ENCODE measurements at regions of chr4 and their contacts with region 1.

Region 1: DNA sequence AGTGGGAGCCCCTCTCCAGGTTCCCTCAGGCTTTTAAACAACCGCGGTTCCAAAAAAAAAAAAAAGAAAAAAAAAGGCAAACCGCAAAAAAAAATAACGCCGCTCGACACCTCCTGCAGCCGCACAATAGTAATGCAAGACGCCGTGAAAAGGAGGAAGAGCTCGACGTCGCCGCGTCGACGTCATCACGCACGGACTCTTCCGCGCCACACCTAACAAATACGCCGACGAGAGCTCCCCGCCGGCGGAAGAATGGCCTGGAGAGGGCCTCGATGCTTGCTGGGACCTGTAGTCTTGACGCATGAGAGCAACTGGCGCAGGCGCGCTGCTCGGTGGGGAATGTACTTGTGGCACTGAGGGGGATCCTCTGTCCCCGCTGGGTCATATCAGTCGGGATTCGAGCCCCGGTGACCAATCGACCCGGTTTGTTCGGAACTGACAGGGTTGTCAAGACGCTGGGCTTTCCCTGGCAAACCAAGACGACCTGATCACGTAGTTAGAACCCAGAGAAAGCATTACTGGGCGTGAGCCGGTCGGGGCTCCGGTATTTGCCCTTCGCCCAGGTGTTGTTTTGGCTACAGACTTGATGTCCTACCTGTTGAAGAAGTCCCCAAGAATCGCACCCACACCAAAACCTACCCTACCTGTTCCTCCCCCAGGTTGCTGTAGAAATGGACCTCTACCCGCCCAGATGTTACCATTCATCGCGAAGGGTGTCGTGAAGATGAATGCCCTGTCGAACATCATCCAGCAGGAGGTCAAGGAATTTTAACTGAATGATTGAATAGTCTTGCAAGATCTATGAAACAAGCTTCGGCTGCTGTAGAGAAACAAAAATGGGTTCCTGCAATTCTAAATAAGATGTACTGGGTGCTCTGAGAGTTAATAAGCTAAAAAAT is at the start of gene CBR4:
- DNase-seq: peak; percentile 97
- H3K4me3 Mint-ChIP-seq: peak within 1 kb of the TSS; percentile 83
- H3K27ac Mint-ChIP-seq: peak within 1 kb of the TSS; percentile 98
- H3K4me1 Mint-ChIP-seq: peaks cover 30% of the 10 kb centered on the region
- H3K27me3 Mint-ChIP-seq: peaks cover 3% of the 10 kb centered on the region
- total RNA-seq, gene CBR4: 10.0 to 12.8 TPM

Region 2: DNA sequence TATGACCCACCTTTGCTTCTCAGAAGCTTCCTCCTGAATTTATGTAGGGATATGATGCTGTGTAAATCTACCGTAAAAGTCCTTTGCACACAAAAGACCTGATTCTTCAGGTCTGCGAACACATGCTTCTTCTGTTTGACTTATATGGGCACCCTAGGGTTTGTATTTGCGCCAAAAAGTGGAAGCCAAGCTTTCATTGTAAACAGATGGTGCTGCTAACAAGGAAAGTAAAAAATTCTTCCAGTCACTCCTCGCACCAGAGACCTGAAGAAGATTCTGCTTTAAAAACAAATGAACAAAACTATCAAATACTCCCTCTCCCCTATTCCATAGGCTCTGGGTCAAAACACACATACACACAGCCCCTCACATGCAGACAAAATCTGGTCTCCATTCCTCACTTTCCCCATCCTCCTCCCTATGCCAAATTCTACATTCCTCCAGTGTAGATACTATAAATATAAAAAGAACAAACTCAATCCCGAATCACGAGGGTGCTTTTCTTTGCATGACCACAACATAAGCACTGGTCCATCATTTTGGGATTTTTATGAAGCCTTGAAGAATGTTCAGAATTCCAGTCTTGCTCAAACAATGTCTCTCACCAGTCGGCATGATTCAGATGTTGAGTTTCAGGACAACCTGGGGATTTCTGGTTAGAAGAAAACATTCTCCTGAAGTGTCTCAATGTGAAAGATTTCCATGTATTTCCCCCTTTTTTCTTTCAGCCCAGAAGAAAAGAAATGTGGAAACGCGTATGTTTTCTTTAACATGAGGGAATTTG is 388.4 kb before region 1 on chr4:
- CTCF ChIA-PET with region 1: no interaction called
- POLR2A ChIA-PET with region 1: no interaction called
- DNase-seq: no peak
- H3K4me3 Mint-ChIP-seq: no peak overlapping the region
- H3K27ac Mint-ChIP-seq: no peak overlapping the region
- H3K4me1 Mint-ChIP-seq: no peaks in the 10 kb centered on the region
- H3K27me3 Mint-ChIP-seq: peaks cover 14% of the 10 kb centered on the region

Region 3: GRCh38 chr4:168995537-168996295 is 14.7 kb before region 1 on chr4:
- CTCF ChIA-PET with region 1: interaction called, 19 read pairs
- POLR2A ChIA-PET with region 1: no interaction called
- DNase-seq: no peak
- H3K4me3 Mint-ChIP-seq: no peak overlapping the region
- H3K27ac Mint-ChIP-seq: no peak overlapping the region
- H3K4me1 Mint-ChIP-seq: no peaks in the 10 kb centered on the region
- H3K27me3 Mint-ChIP-seq: no peaks in the 10 kb centered on the region

Region 4: GRCh38 chr4:169795585-169795984 is 785.2 kb after region 1 on chr4:
- CTCF ChIA-PET with region 1: no interaction called
- POLR2A ChIA-PET with region 1: no interaction called
- DNase-seq: no peak
- H3K4me3 Mint-ChIP-seq: no peak overlapping the region
- H3K27ac Mint-ChIP-seq: no peak overlapping the region
- H3K4me1 Mint-ChIP-seq: peaks cover 5% of the 10 kb centered on the region
- H3K27me3 Mint-ChIP-seq: peaks cover 22% of the 10 kb centered on the region